ENCODE measurements at regions of chr12 and their contacts with region 1.

Region 1: GRCh38 chr12:27779920-27780611 is at the starts of genes KLHL42 and MANSC4:
- DNase-seq: peak; percentile 73
- H3K4me3 Mint-ChIP-seq: peak within 1 kb of the TSS; percentile 78
- H3K27ac Mint-ChIP-seq: peak within 1 kb of the TSS; percentile 65
- H3K4me1 Mint-ChIP-seq: peaks cover 30% of the 10 kb centered on the region
- H3K27me3 Mint-ChIP-seq: no peaks in the 10 kb centered on the region
- total RNA-seq, gene KLHL42: 8.2 to 9.1 TPM
- total RNA-seq, gene MANSC4: not detected

Region 2: GRCh38 chr12:27710592-27711316 is 69.3 kb before region 1 on chr12 and contains the start of gene MRPS35:
- CTCF ChIA-PET with region 1: no interaction called
- POLR2A ChIA-PET with region 1: no interaction called
- intact Hi-C with region 1: loop called (anchors 5 kb)
- DNase-seq: peak; percentile 95
- H3K4me3 Mint-ChIP-seq: peak within 1 kb of the TSS; percentile 93
- H3K27ac Mint-ChIP-seq: peak within 1 kb of the TSS; percentile 90
- H3K4me1 Mint-ChIP-seq: peaks cover 17% of the 10 kb centered on the region
- H3K27me3 Mint-ChIP-seq: peaks cover 3% of the 10 kb centered on the region
- total RNA-seq, gene MRPS35: 49.2 to 50.2 TPM

Measured in activated CD4-positive, alpha-beta memory T cell treated with anti-CD3 and anti-CD28 coated beads for 36 hours (primary cell).